CD8-positive, alpha-beta T cell (primary cell): ENCODE measurements at regions of chr9 and their contacts with region 1.

Region 1: GRCh38 chr9:14693206-14693861 is at the start of gene ZDHHC21:
- DNase-seq: peak; percentile 1 to 75 (median 52)
- ATAC-seq: peak; percentile 70
- H3K4me3 ChIP-seq: peak within 1 kb of the TSS; percentile 58 to 66
- H3K4me3 Mint-ChIP-seq: peak within 1 kb of the TSS; percentile 93
- H3K27ac ChIP-seq: no peak within 1 kb of the TSS
- H3K27ac Mint-ChIP-seq: peak within 1 kb of the TSS; percentile 78
- H3K4me1 ChIP-seq: peaks cover 13% of the 10 kb centered on the region
- H3K4me1 Mint-ChIP-seq: peaks cover 28% of the 10 kb centered on the region
- H3K27me3 ChIP-seq: no peaks in the 10 kb centered on the region
- H3K27me3 Mint-ChIP-seq: peaks cover 6% of the 10 kb centered on the region
- CTCF ChIP-seq: no peak
- total RNA-seq, gene ZDHHC21: 2.3 to 3.2 TPM

Region 2: GRCh38 chr9:14846871-14847311 is 153.6 kb after region 1 on chr9:
- CTCF ChIA-PET with region 1: no interaction called
- POLR2A ChIA-PET with region 1: no interaction called
- intact Hi-C with region 1: loop called in 1 of 2 experiments (anchors 5 kb)
- DNase-seq: peak; percentile 0 to 51 (median 16)
- ATAC-seq: no peak
- H3K4me3 ChIP-seq: no peak overlapping the region
- H3K4me3 Mint-ChIP-seq: no peak overlapping the region
- H3K27ac ChIP-seq: no peak overlapping the region
- H3K27ac Mint-ChIP-seq: no peak overlapping the region
- H3K4me1 ChIP-seq: no peaks in the 10 kb centered on the region
- H3K4me1 Mint-ChIP-seq: no peaks in the 10 kb centered on the region
- H3K27me3 ChIP-seq: no peaks in the 10 kb centered on the region
- H3K27me3 Mint-ChIP-seq: peaks cover 11% of the 10 kb centered on the region
- CTCF ChIP-seq: peak; percentile 41